ENCODE measurements at regions of chr1 and their contacts with region 1.

Region 1: DNA sequence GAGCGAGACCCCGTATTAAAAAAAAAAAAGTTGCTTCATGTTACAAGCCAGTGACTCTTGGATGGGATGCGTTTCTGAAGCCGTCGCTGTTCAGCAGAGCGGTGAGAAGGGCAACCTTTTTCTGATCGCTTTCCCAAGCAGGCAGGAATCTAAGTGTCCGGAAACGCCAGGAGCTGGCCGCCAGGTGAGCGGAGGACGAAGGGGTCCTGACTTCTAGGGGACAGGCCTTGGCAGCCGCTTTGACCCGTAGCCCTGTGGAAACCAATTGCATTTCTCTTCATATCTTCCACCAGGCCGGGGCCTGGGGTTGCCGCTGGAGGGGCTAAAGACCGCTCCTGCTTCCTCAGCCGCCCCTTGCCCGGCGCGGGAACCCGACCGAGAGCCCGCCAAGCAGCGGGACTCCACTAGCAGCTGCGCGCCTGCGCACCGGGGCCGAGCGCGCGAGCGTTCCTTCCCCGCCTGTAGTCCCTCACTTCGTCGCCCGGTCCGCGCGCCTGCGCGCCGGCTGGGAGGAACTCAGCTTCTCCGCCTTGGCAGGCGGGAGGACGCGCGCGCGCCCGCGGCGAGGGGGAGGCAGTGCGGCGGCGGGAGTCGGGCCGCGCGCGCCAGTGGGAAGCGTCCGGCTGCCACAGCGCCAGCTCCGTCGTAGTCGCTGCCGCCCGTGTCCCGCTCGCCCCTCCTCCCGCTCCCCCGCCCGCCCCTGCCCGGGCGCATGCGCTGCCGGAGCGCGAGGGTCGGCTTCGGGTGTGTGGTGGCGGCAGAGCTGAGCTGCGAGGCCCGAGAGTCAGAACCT is at the start of gene SPEN:
- DNase-seq: peak; percentile 99
- H3K4me3 ChIP-seq: peak within 1 kb of the TSS; percentile 78 to 95 (median 83)
- H3K27ac ChIP-seq: peak within 1 kb of the TSS; percentile 92 to 99 (median 96)
- H3K4me1 ChIP-seq: peaks cover 0 to 46% (median 39%) of the 10 kb centered on the region in 4 donors
- H3K27me3 ChIP-seq: no peaks in the 10 kb centered on the region
- CTCF ChIP-seq: peak in 2 of 4 experiments; percentile 11 to 26
- EP300 ChIP-seq: no peak
- POLR2A ChIP-seq: peak; percentile 87 to 88
- total RNA-seq, gene SPEN: 20.4 to 38.5 (median 22.6) TPM

Region 2: GRCh38 chr1:15835741-15836510 is 11.4 kb before region 1 on chr1:
- intact Hi-C with region 1: loop called (anchors 1 kb)
- DNase-seq: peak; percentile 100
- H3K4me3 ChIP-seq: peak overlapping the region; percentile 50 to 98 (median 74)
- H3K27ac ChIP-seq: peak overlapping the region; percentile 99 to 100 (median 99)
- H3K4me1 ChIP-seq: peaks cover 0 to 26% (median 20%) of the 10 kb centered on the region in 4 donors
- H3K27me3 ChIP-seq: no peaks in the 10 kb centered on the region
- CTCF ChIP-seq: no peak
- EP300 ChIP-seq: peak in 1 of 4 donors; percentile 94
- POLR2A ChIP-seq: peak; percentile 92 to 93

Region 3: GRCh38 chr1:15885701-15886610 is 38.7 kb after region 1 on chr1:
- intact Hi-C with region 1: loop called (anchors 2 kb)
- DNase-seq: peak; percentile 99
- H3K4me3 ChIP-seq: peak overlapping the region; percentile 21 to 46 (median 40)
- H3K27ac ChIP-seq: peak overlapping the region; percentile 82 to 90 (median 88)
- H3K4me1 ChIP-seq: peaks cover 0 to 45% (median 38%) of the 10 kb centered on the region in 4 donors
- H3K27me3 ChIP-seq: no peaks in the 10 kb centered on the region
- CTCF ChIP-seq: no peak
- EP300 ChIP-seq: peak in 2 of 4 donors; percentile 43 to 72
- POLR2A ChIP-seq: peak in 1 of 2 donors; percentile 26

Region 4: DNA sequence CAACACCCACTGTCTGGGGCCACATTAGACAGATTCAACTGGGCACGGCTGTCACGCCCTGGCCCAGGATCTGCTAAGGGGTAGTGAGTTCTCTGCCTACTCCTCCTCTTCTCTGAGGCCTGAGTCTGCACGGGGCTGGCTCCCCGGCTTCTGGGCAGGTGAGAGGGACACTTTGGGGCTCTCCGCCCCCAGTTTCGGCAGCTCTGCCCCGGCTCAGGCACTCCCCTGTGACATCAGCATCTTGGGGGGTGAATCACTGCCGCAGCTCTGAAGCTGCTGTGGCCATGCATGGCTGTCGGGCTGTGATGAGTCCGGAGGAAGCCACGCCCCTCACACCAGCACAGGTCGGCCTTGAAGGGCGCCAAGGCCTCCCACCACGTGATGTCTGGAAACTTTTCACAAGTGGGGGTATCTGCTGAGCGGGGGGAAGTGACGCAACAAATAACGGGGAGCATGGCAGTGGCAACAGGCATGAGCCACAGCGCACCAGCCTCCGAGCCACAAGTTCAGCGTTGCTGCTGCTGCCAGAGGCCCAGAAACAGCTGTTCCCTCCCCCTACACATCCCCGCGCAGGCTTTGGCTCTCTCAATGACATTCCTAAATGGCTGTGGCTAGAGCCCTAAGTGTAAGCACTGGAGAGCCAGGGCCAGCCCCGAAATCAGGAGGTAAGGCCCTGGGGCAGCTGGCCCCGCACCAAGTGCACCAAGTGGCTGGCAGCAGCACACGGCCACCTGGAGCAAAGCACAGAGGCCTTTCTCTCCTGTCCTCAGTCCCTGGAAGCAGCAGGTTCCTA is 102.4 kb after region 1 on chr1:
- intact Hi-C with region 1: loop called (anchors 2 kb)
- DNase-seq: peak; percentile 99
- H3K4me3 ChIP-seq: peak overlapping the region in 3 of 4 donors; percentile 20 to 35 (median 33)
- H3K27ac ChIP-seq: peak overlapping the region; percentile 78 to 96 (median 89)
- H3K4me1 ChIP-seq: peaks cover 0 to 69% (median 63%) of the 10 kb centered on the region in 4 donors
- H3K27me3 ChIP-seq: no peaks in the 10 kb centered on the region
- CTCF ChIP-seq: no peak
- EP300 ChIP-seq: peak in 2 of 4 donors; percentile 3 to 92
- POLR2A ChIP-seq: no peak

Region 5: GRCh38 chr1:16459352-16459925 is 612.1 kb after region 1 on chr1:
- intact Hi-C with region 1: no loop called
- DNase-seq: no peak
- H3K4me3 ChIP-seq: no peak overlapping the region
- H3K27ac ChIP-seq: no peak overlapping the region
- H3K4me1 ChIP-seq: no peaks in the 10 kb centered on the region
- H3K27me3 ChIP-seq: no peaks in the 10 kb centered on the region
- CTCF ChIP-seq: no peak
- EP300 ChIP-seq: no peak
- POLR2A ChIP-seq: no peak